ENCODE measurements at regions of chr1 and their contacts with region 1.

Region 1: DNA sequence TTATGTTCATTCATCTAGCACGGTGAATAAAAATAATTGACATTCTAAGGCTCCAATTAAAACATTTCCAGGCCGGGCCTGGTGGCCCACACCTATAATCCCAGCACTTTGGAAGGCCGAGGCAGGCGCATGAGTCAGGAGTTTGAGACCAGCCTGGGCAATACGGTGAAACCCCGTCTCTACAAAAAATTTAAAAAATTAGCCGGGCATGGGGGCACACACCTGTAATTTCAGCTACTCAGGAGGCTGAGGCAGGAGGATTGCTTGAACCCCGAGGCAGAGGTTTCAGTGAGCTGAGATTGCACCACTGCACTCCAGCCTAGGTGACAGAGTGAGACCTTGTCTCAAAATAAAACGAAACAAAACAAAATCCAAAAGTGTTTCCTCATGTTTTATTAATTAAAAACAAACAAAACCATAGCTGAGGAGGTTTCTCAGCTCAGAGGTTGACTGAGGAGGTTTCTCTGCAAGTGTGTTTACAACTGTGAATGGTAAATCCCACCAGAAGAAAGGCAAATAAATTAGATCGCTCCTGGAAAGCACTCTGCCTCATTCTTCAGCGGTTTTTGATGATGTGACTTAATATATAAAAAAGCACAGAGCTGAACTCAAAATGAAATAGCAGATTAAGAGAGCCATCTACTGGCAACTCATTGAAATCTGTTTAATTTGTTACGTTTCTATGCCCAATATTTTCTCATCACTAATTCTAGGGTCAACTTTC is 37.7 kb upstream of the ATG4C start:
- DNase-seq: no peak
- ATAC-seq: peak; percentile 36

Region 2: DNA sequence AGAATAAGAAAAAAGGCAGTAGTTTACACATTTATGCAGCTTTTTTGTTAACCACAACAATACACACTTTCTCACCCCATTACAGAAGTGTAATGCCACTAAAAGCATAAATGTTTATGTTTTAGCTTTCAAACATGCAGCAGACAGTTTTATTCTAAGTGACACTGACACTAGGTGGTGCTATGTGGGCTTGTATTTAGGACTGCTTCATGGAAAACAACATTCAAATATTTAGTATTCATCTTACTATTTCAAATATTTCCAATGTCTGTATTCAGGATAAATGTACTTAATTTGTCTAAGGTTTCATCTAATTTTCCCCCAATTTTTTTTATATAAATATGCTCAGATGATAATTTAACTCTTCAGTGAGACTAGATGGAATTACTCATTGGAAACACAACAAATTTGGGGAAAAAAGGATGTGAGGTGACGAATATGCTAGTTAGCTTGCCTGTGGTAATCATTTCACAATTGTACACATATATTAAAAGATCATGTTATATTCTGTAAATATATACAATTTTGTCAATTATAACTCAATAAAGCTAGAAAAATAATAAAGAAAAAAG is 238.0 kb before region 1 on chr1:
- intact Hi-C with region 1: loop called (anchors 5 kb)
- DNase-seq: no peak
- ATAC-seq: no peak

Region 3: DNA sequence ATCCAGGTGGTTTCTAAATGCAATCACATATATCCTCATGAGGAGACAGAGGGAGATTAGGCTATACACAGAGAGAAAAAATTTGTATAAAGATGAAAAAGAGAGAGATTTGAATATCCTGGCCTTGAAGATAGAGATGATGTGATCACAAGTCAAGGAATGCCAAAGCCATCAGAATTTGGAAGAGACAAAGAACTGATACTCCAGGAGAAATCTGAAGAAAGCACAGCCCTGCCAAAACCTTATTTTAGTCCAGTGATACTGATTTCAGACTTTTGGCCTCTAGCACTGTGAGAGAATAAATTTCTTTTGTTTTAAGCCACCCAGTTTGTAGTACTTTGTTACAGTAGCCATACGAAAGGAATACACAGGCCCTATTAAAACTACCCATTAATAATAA is 91.5 kb before region 1 on chr1:
- intact Hi-C with region 1: no loop called
- DNase-seq: no peak
- ATAC-seq: no peak

Region 4: DNA sequence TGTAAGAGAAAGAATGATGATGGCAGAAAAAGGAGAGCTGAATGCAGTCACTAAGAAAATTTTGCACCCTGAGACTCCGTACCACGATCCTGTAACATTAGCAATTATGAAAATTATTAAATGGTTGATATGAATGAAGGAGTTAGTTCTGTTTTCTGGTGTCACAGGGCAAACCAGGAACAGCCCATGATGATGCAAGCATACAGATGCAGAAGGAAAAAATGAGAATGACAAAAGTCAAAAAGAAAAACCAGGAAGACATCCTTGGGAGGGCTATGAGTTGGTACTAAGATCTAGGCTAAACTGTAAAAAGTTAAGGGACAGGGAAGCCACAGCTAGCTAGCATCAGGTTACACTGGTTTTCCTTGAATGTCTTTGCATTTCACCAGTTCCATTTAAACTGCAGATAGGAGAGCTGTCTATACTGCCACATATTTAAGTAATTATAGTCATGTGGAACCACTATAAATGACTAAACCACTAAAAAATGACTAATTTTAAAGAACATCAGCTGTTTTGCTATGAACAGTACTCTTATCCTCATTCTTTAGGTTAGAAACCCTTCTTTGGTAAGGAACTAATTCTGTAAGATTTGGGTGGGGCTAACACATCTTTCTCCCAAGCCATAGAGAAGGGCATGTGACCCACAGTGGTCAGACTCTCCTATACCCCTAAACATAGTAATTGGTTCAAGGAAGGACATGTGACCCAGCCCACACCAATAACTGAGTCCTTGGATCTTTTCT is 69.5 kb before region 1 on chr1:
- intact Hi-C with region 1: no loop called
- DNase-seq: no peak
- ATAC-seq: no peak

Region 5: GRCh38 chr1:62926681-62927252 is 180.5 kb after region 1 on chr1:
- intact Hi-C with region 1: no loop called
- DNase-seq: no peak
- ATAC-seq: no peak